Psoas muscle (tissue), 8 donors: ENCODE measurements at regions of chr14 and their contacts with region 1.

Region 1: GRCh38 chr14:91177073-91178034 is 63.5 kb downstream of the DGLUCY start:
- DNase-seq: peak; percentile 44 to 61
- ATAC-seq: peak; percentile 29 to 59 (median 46)
- H3K4me3 ChIP-seq: no peak overlapping the region
- H3K27ac ChIP-seq: no peak overlapping the region
- H3K4me1 ChIP-seq: peaks cover under 1% of the 10 kb centered on the region
- H3K27me3 ChIP-seq: no peaks in the 10 kb centered on the region
- CTCF ChIP-seq: peak; percentile 70

Region 2: DNA sequence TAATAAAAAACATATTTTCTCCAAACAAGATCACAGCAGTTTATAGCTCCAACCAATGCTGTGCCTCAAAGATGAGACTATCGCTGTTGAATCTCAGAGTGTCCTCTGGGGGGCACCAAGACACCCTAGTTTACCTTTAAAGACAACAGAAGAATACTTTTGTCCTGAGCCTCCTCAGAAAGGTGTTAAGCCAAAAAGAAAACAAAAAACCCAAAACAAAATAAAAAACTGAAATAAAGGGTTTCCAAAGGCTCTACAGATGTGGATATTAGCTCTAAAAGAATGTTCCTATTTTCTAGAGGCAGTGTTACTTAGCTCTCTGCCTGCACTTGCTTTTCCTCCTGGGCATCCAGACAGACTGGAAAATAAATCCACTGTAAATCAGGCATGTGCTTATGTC is 274.3 kb before region 1 on chr14:
- intact Hi-C with region 1: loop called (anchors 1 to 2 kb)
- DNase-seq: peak in 1 of 2 donors; percentile 26
- ATAC-seq: peak; percentile 58 to 94 (median 86)
- H3K4me3 ChIP-seq: no peak overlapping the region
- H3K27ac ChIP-seq: no peak overlapping the region
- H3K4me1 ChIP-seq: no peaks in the 10 kb centered on the region
- H3K27me3 ChIP-seq: no peaks in the 10 kb centered on the region
- CTCF ChIP-seq: peak; percentile 72

Region 3: GRCh38 chr14:91138511-91139359 is 38.6 kb before region 1 on chr14:
- intact Hi-C with region 1: loop called in 1 of 2 experiments (anchors 5 kb)
- DNase-seq: no peak
- ATAC-seq: peak; percentile 60 to 76 (median 68)
- H3K4me3 ChIP-seq: no peak overlapping the region
- H3K27ac ChIP-seq: peak overlapping the region; percentile 15
- H3K4me1 ChIP-seq: peaks cover 20% of the 10 kb centered on the region
- H3K27me3 ChIP-seq: no peaks in the 10 kb centered on the region
- CTCF ChIP-seq: peak; percentile 53

Region 4: GRCh38 chr14:91286530-91286937 is 109.2 kb after region 1 on chr14:
- intact Hi-C with region 1: loop called (anchors 2 to 5 kb)
- DNase-seq: peak; percentile 76 to 77
- ATAC-seq: peak; percentile 66 to 83 (median 75)
- H3K4me3 ChIP-seq: no peak overlapping the region
- H3K27ac ChIP-seq: no peak overlapping the region
- H3K4me1 ChIP-seq: no peaks in the 10 kb centered on the region
- H3K27me3 ChIP-seq: no peaks in the 10 kb centered on the region
- CTCF ChIP-seq: peak; percentile 87